Cardiac septum (tissue), 1 donor: ENCODE measurements at regions of chr3 and their contacts with region 1.

Region 1: DNA sequence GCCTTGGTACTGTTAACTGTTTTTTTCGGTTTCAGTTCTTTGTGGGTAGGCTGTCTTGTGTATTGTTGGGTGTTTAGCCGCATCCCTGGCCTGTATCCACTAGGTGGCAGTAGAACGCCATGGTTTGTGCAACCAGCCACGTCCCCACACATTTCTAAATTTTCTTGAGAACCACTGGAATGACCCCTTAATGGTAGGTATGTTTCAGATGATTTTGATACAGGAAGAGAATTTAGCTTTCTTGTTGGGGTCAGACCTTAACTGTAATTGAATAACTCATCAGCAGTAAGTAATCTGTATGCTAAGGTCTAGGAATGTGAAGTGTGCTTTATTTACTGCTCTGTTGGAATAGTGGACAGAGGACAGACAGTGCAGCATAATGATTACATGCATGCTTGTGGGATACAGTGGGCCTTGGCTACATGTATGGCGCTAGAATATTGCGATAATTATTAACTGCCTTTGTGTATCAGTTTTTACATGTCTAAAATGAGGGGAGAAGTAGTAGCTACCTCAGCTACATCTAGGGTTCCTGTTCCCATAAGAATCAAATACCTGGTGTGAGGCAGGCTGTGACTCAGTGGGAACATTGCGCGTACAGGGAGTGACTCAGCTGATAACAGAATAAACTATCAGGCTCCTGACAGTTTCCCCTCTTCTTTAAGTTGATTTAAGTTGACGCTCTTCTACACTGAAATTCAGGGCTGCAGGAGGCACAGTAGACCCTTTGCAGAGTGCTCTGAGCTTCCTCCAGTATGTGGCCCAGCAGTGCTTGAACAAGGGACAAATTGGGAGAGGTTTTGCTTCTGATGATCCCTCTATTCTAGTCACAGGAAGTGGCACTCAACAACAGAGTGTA is 25.0 kb upstream of the GPR171 start:
- DNase-seq: peak; percentile 89

Region 2: GRCh38 chr3:150787741-150788370 is 440.2 kb before region 1 on chr3:
- intact Hi-C with region 1: no loop called
- DNase-seq: peak; percentile 93

Region 3: DNA sequence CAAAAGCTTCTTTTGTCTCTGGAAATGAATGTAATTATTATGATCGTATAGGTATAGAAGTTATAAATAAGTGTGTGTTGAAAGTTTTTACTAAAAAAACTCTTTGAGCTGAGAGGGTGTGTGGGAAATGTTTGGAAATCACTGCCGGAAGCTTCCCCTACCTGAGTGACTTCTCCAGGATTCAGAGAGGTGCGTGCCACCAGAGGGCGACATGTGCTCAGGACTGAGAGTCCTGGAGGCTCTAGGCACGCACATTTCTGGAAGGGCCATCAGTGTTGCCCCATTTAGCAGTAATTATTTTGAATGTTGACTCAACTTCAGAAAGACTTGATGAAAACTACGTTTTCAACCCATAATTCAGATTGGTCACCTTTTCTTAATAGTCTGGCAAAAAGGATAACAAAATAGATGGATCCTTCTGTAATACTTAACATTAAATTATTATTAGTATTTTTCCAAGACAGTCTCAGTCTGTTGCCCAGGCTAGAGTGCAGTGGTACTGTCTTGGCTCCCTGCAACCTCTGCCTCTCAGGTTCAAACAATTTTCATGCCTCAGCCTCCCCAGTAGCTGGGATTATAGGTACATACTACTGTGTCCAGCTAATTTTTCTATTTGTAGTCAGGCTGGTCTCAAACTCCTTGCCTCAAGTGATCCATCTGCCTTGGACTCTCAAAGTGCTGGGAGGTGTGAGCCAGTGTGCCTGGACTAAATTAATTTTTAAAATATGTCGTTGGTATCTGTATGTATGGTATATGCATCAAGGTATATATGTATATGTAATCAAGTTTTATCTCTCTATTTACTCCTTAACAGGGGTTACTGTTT is 59.6 kb before region 1 on chr3:
- intact Hi-C with region 1: loop called (anchors 5 kb)
- DNase-seq: peak; percentile 86

Region 4: GRCh38 chr3:151282921-151283320 is 54.9 kb after region 1 on chr3:
- intact Hi-C with region 1: loop called (anchors 1 kb)
- DNase-seq: no peak

Region 5: GRCh38 chr3:151439652-151440129 is 211.7 kb after region 1 on chr3:
- intact Hi-C with region 1: loop called (anchors 10 kb)
- DNase-seq: no peak

Region 6: GRCh38 chr3:151918253-151919029 is 690.4 kb after region 1 on chr3:
- intact Hi-C with region 1: loop called (anchors 5 kb)
- DNase-seq: no peak